ENCODE measurements at regions of chr18 and their contacts with region 1.

Region 1: GRCh38 chr18:49858309-49859020 is 45.1 kb upstream of the ACAA2 start:
- DNase-seq: peak; percentile 77
- H3K4me3 ChIP-seq: no peak overlapping the region
- H3K27ac ChIP-seq: peak overlapping the region; percentile 19
- H3K4me1 ChIP-seq: peaks cover 5% of the 10 kb centered on the region
- H3K27me3 ChIP-seq: no peaks in the 10 kb centered on the region
- CTCF ChIP-seq: peak; percentile 83 to 86
- POLR2A ChIP-seq: no peak

Region 2: GRCh38 chr18:49250816-49251388 is 607.6 kb before region 1 on chr18:
- CTCF ChIA-PET with region 1: interaction called, 8 read pairs
- POLR2A ChIA-PET with region 1: no interaction called
- dilution Hi-C with region 1: no loop called
- intact Hi-C with region 1: loop called (anchors 5 kb)
- DNase-seq: peak; percentile 47
- H3K4me3 ChIP-seq: no peak overlapping the region
- H3K27ac ChIP-seq: no peak overlapping the region
- H3K4me1 ChIP-seq: peaks cover 38% of the 10 kb centered on the region
- H3K27me3 ChIP-seq: no peaks in the 10 kb centered on the region
- CTCF ChIP-seq: peak; percentile 32 to 52
- POLR2A ChIP-seq: no peak

Region 3: GRCh38 chr18:49486953-49487710 is 371.3 kb before region 1 on chr18 and contains the start of gene C18orf32:
- CTCF ChIA-PET with region 1: interaction called, 11 read pairs
- POLR2A ChIA-PET with region 1: no interaction called
- dilution Hi-C with region 1: no loop called
- intact Hi-C with region 1: no loop called
- DNase-seq: peak; percentile 94
- H3K4me3 ChIP-seq: peak within 1 kb of the TSS; percentile 26 to 78 (median 64)
- H3K27ac ChIP-seq: peak within 1 kb of the TSS; percentile 65
- H3K4me1 ChIP-seq: peaks cover 30% of the 10 kb centered on the region
- H3K27me3 ChIP-seq: no peaks in the 10 kb centered on the region
- CTCF ChIP-seq: no peak
- POLR2A ChIP-seq: peak; percentile 99
- total RNA-seq, gene C18orf32: 27.4 and 28.4 TPM in 2 replicates

Region 4: DNA sequence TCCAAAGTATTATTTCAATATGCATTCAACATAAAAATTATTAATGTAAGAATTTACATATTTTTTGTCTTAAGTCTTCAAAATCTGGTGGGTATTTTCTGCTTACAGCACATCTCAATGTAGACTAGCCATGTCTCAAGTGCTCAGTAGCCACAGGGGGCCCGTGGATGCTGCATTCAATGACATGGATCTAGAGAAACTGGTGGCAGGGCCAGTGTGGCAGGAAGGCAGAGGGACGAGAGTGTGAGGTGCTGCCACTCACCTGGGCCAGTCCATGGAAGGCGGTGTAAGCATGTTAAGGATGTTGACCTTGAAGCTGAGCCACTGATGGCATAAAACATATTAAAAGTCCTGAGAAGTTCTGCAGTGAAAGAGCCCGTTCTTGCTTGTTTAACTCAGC is 302.8 kb before region 1 on chr18:
- CTCF ChIA-PET with region 1: interaction called, 162 read pairs
- POLR2A ChIA-PET with region 1: no interaction called
- dilution Hi-C with region 1: no loop called
- intact Hi-C with region 1: loop called (anchors 1 kb)
- DNase-seq: no peak
- H3K4me3 ChIP-seq: no peak overlapping the region
- H3K27ac ChIP-seq: no peak overlapping the region
- H3K4me1 ChIP-seq: no peaks in the 10 kb centered on the region
- H3K27me3 ChIP-seq: peaks cover 5% of the 10 kb centered on the region in 2 experiments
- CTCF ChIP-seq: no peak
- POLR2A ChIP-seq: no peak

Region 5: DNA sequence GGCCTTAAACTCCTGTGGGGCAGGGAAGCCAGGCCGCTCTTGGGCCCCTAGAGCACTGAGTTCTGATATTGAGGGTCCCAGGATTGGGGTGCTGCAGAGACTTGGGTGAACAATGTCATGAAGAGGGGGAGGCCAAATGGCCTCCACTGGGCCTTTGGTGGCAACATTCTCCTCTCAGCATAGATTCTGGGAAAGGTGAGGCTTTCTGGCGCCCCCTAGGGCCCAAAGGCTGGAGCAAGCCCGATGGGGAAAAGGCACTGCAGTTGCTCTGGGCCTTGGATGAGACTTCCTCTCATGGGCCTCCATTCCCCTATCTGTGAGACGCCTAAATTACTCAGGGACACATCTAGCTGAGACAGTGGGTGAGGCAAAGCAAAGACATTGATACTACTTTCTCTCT is 129.9 kb before region 1 on chr18:
- CTCF ChIA-PET with region 1: interaction called, 25 read pairs
- POLR2A ChIA-PET with region 1: no interaction called
- dilution Hi-C with region 1: no loop called
- intact Hi-C with region 1: loop called (anchors 1 kb)
- DNase-seq: peak; percentile 54
- H3K4me3 ChIP-seq: no peak overlapping the region
- H3K27ac ChIP-seq: no peak overlapping the region
- H3K4me1 ChIP-seq: peaks cover 33% of the 10 kb centered on the region
- H3K27me3 ChIP-seq: no peaks in the 10 kb centered on the region
- CTCF ChIP-seq: peak; percentile 84 to 87
- POLR2A ChIP-seq: no peak

Region 6: DNA sequence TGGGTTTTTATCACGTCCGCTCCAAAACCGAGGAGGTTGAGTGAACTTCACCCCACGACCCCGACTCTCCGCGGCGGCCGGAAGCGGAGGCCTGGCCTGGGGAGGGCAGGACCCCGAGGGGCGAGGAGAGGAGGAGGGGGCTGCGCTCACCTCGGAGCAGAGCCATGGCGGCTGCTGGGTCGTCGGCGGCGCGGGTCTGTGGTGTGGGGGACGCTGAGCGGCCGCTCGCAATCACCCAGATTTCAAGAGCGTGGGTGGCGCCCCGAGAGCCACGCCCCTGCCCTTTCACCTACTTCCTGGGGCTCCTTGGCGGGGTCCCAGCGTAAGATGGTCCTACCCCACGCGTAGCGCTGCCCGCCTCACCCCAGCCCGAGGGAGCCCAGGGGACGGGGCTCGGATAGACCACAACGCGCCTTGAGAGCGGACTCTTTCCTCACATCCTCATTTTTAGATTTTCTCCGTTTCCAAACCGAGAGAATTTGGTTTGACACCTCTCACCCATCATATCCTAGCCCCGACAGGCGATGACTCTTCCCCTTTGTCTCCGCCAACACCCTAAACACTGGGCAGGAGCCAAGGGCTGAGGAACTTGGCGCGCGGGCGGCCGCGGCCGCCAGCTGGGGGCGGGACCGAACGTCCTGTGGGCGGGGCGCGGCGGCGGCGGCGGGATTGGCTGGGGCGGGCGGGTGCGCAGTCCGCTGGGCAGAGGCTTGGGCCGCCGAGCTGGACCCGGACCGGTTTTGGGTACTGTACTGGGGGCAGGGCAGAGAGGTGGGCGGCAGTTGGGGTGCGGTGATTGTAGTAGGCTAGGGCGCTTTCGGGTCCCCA is 44.9 kb before region 1 on chr18 and contains the start of gene ACAA2:
- CTCF ChIA-PET with region 1: interaction called, 34 read pairs
- POLR2A ChIA-PET with region 1: interaction called, 4 read pairs
- dilution Hi-C with region 1: no loop called
- intact Hi-C with region 1: loop called (anchors 1 kb)
- DNase-seq: peak; percentile 83
- H3K4me3 ChIP-seq: peak within 1 kb of the TSS; percentile 48 to 75 (median 64)
- H3K27ac ChIP-seq: peak within 1 kb of the TSS; percentile 94
- H3K4me1 ChIP-seq: peaks cover 12% of the 10 kb centered on the region
- H3K27me3 ChIP-seq: no peaks in the 10 kb centered on the region
- CTCF ChIP-seq: no peak
- POLR2A ChIP-seq: peak; percentile 93
- total RNA-seq, gene ACAA2: 44.4 and 44.9 TPM in 2 replicates

Region 7: DNA sequence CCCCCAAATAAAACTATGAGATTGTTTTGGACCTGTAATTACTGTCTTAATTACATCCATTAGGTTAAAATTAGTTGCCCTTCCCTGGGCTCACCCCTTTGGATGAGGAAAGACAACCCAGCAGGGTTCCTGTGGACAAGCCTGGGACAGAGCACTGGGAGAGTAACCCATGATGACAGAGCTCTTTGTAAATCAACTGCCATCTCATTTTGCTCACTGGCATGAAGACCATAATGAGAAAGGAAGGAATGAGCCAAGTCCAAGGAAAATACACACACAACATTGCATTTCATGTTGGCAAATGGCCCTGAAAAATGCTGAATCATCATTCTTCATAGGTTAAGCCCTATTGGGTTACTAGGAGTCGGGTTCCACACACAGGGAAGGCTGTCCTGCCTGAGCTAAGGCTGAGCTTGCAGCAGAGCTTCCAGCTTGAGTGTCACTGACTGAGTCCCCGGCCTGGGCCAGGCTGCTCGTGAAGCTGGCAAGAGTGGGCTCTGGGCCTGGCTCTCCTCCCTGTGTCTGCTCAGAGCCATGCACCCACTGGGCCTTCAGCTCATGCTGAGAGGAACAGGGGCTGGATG is 49.0 kb after region 1 on chr18:
- CTCF ChIA-PET with region 1: no interaction called
- POLR2A ChIA-PET with region 1: no interaction called
- dilution Hi-C with region 1: no loop called
- intact Hi-C with region 1: no loop called
- DNase-seq: no peak
- H3K4me3 ChIP-seq: no peak overlapping the region
- H3K27ac ChIP-seq: no peak overlapping the region
- H3K4me1 ChIP-seq: no peaks in the 10 kb centered on the region
- H3K27me3 ChIP-seq: no peaks in the 10 kb centered on the region
- CTCF ChIP-seq: no peak
- POLR2A ChIP-seq: no peak